GM18951 (cell line): ENCODE measurements at regions of chr1 and their contacts with region 1.

Region 1: GRCh38 chr1:154878371-154879022 is 8.4 kb upstream of the KCNN3 start:
- POLR2A ChIP-seq: no peak

Region 2: GRCh38 chr1:154558575-154559465 is 319.7 kb before region 1 on chr1 and contains the start of gene UBE2Q1:
- in situ Hi-C with region 1: loop called (anchors 25 kb)
- POLR2A ChIP-seq: peak; percentile 64

Region 3: GRCh38 chr1:154669464-154670282 is 208.8 kb before region 1 on chr1:
- in situ Hi-C with region 1: loop called (anchors 5 kb)
- POLR2A ChIP-seq: no peak

Region 4: DNA sequence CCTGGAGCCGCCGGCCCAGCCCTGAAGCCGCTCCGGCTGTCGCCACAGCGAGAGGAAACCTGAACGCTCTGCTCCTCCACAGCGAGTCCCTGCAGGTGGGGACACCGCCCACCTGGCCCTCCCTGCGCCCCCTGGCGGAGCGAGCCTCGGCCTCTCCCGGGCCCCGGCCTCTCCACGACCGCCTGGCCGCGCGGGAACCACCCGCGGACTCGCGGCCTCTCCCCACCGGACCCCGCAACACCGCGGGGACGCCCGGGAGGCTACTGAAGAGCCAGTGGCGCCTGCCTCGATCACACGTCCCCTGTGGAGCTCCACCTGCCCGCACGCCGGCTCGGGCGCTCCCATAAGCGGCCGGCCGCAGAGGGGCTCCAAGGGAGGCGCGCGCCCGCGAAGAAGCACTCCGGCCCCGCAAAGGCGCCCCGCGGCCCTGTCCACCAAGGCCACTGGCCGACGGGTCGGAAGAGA is 118.0 kb before region 1 on chr1:
- in situ Hi-C with region 1: no loop called
- POLR2A ChIP-seq: no peak

Region 5: DNA sequence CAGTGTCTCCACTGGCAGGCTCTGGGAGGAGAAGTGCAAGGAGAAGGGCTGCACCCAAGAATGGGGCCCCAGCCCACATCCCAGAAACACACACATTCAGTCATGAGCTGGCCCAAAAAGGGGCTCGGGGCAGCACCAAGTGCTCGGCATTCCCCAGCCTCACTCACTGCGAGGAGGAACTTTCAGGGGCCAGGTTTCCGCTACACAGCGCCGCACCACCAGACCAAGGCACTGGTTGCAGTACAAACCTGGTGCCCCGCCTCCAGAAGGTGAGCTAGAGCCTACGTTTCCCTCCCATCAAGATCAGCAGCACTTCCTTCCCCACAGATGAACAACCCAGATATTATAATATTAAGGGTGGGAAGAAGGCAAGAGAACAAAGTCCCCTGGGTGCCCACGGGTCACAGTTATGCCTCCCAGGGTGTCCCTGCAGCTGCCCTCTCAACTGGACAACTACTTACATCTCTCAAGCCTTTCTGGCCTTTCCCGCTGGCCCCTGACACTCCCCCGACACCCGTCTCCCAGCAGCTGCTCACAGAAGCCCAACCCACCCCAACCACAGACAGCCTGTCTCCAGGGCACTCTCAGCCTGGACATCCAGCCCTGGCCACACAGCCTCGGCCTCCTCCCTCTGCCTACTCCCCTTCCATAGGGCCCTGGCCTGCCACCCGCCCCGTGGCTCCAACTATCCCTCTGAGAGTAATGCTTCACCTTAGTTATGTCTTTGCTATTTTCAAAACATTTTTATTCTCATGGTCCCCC is 73.6 kb after region 1 on chr1:
- in situ Hi-C with region 1: loop called (anchors 5 kb)
- POLR2A ChIP-seq: no peak

Region 6: DNA sequence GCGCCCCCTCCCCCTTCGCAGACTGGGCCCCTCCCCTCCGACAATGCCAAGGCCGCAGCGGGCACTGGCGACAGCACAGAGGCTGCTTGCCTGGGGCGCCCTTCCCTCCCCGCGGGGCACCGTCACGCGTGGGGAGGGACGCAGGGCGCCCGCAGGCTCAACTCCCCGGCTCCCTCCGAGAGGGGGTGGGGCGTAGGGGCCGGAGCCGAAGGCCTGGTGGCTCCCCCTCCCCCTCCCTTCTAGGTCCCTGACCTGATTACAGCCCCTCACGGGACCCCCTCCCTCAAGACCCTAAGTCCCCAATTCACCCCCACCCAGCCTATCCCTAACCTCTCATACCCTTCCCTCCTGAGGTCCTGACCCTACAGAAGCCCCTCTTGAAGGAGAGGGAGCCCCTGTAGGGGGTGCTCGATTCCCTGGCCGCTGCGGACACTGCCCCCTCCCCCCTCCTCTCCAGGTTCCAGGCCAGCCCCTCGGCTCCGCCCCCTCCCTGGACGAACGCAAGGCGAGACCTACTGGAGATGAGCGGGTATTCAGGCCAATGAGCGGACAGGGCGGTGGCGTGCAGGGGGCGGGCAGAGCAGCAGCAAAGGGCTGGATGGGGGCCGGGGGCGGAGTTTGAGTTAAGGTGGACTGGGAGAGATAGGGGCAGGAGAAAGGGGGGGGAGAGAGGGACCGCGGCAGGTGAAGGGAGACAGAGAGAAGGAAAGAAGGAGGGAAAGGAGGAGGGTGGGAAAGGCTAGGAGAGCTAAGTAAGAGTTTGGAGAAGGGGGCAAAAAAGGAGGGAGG is 123.4 kb after region 1 on chr1:
- in situ Hi-C with region 1: no loop called
- POLR2A ChIP-seq: peak; percentile 1